ENCODE measurements at regions of chr4 and their contacts with region 1.

Region 1: DNA sequence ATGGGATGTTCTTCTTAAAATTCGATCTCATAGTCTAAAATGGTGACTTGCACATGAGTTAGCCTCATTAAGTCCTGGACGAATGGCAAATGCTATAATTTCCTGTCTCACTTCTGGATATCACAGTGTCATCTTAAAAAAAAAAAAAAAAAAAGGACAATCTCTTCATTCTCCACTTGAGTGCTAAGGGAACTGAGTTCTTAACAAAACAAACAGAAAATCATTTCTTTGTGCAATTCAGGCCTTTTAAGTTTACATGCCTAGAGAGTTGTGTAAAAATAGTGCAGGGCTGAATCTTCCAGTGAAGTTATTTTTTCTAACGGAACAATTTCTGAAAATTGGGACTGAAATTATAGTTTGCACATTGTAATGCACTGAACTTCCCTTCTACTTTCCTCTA is 122.8 kb upstream of the FAT1 start:
- DNase-seq: no peak
- ATAC-seq: no peak
- H3K4me3 ChIP-seq: no peak overlapping the region
- H3K27ac ChIP-seq: peak overlapping the region; percentile 99
- H3K4me1 ChIP-seq: peaks cover 28% of the 10 kb centered on the region
- H3K27me3 ChIP-seq: no peaks in the 10 kb centered on the region
- CTCF ChIP-seq: no peak

Region 2: GRCh38 chr4:186946682-186947294 is 100.4 kb after region 1 on chr4:
- CTCF ChIA-PET with region 1: no interaction called
- POLR2A ChIA-PET with region 1: interaction called, 13 read pairs
- in situ Hi-C with region 1: no loop called
- intact Hi-C with region 1: no loop called
- DNase-seq: no peak
- ATAC-seq: peak; percentile 96
- H3K4me3 ChIP-seq: no peak overlapping the region
- H3K27ac ChIP-seq: peak overlapping the region; percentile 8; the same call in 1 of the 2 replicates
- H3K4me1 ChIP-seq: peaks cover 17% of the 10 kb centered on the region
- H3K27me3 ChIP-seq: no peaks in the 10 kb centered on the region
- CTCF ChIP-seq: peak; percentile 74

Measured in Panc1 (cell line).